Head of caudate nucleus (tissue), 42 donors: ENCODE measurements at regions of chr1 and their contacts with region 1.

Region 1: DNA sequence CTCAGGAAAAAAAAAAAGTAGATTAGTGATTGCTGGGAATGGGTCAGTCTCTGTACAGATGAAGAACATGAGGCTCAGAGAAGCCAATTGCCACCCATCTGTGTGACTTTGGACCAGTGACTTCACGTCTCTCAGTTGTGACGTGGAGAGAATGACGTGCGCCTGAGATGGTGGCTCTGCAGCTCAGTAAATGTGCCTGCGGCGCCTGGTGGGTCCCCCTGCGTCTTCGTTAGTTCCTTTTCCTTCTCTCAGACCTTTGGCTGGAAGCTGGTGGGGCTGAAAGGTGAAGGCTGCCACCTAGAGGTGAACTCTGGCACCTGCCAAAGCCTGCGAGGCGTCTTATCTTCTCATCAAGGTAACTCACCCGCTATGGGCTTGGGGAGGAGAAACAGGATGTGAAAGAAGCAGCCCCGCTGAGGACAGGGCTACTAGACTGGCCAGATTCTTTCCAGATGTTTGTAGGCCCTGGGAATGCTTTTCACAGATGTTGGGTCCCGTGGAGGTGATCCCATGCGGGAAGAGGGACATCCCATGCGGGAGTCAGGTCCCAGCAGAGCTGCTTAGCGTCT is 8.7 kb upstream of the E2F2 start:
- DNase-seq: peak; percentile 64 to 94 (median 88)

Region 2: GRCh38 chr1:23263380-23263887 is 276.3 kb before region 1 on chr1:
- intact Hi-C with region 1: no loop called
- DNase-seq: no peak

Region 3: GRCh38 chr1:23367791-23368561 is 171.8 kb before region 1 on chr1:
- intact Hi-C with region 1: loop called (anchors 5 kb)
- DNase-seq: peak; percentile 98 to 100 (median 99)

Region 4: DNA sequence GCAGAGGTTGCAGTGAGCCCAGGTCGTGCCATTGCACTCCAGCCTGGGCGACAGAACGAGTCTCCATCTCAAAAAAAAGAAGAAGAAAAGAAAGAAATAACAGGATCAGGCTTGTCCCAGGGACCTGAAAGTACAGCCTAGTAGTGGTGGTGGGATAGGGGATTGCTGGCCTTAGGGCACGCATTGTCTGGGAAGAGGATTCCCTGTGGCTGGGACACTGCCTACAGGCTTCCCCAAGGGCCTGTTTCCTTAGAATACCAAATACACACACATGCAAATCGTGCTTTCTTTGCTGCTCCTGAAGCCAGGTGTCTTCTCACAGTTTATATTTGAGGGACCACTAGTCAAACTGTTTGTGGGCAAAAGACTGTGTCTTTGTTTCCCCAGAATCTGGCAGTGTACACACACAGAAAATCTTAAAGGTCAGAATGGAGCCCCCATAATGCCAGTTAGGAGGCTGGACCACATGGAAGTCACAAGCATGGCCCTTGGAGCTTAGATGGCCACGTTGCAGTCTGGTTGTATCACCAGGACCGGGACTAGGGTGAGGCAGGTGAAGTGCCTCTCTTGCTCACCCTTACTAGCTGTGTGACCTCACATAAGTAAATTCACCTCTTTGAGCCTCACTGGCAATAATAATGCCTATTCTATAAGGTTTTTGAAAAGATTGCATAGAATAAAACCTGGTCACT is 43.1 kb before region 1 on chr1:
- intact Hi-C with region 1: loop called (anchors 5 kb)
- DNase-seq: no peak

Region 5: GRCh38 chr1:23577056-23578004 is 37.5 kb after region 1 on chr1:
- intact Hi-C with region 1: no loop called
- DNase-seq: no peak

Region 6: GRCh38 chr1:23634842-23635651 is 95.3 kb after region 1 on chr1:
- intact Hi-C with region 1: loop called (anchors 2 kb)
- DNase-seq: peak in 39 of 42 donors; percentile 18 to 87 (median 58)